ENCODE measurements at regions of chr12 and their contacts with region 1.

Region 1: GRCh38 chr12:93569656-93570551 is 2.6 kb upstream of the SOCS2 start:
- DNase-seq: peak; percentile 92
- ATAC-seq: peak; percentile 69
- H3K4me3 Mint-ChIP-seq: peak overlapping the region; percentile 85
- H3K27ac Mint-ChIP-seq: peak overlapping the region; percentile 90
- H3K4me1 Mint-ChIP-seq: peaks cover 13% of the 10 kb centered on the region
- H3K27me3 Mint-ChIP-seq: peaks cover 26% of the 10 kb centered on the region
- CTCF ChIP-seq: peak; percentile 76

Region 2: GRCh38 chr12:93223440-93224426 is 346.2 kb before region 1 on chr12:
- CTCF ChIA-PET with region 1: no interaction called
- POLR2A ChIA-PET with region 1: no interaction called
- DNase-seq: no peak
- ATAC-seq: no peak
- H3K4me3 Mint-ChIP-seq: no peak overlapping the region
- H3K27ac Mint-ChIP-seq: no peak overlapping the region
- H3K4me1 Mint-ChIP-seq: peaks cover 14% of the 10 kb centered on the region
- H3K27me3 Mint-ChIP-seq: no peaks in the 10 kb centered on the region; the same call in 1 of the 2 replicates
- CTCF ChIP-seq: no peak

Region 3: DNA sequence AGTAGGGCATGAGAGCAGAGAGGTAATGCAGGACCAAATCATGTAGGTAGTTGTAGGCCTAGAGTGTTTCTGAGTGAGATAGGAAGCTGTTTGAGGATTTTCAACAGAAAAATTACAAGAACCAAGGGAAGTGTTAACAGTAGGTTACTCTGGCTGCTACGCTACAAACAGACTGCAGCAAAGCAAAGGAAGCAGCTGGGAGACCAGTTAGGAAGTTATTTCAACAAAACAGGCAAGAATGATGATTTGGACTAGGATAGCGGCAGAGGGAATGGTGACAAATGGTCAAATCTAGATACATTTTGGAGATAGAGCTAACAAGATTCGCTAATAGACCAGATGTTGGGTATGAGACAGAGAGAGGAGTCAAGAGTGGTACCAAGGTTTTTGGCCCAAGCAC is 75.8 kb before region 1 on chr12:
- CTCF ChIA-PET with region 1: no interaction called
- POLR2A ChIA-PET with region 1: no interaction called
- DNase-seq: no peak
- ATAC-seq: no peak
- H3K4me3 Mint-ChIP-seq: no peak overlapping the region
- H3K27ac Mint-ChIP-seq: no peak overlapping the region
- H3K4me1 Mint-ChIP-seq: no peaks in the 10 kb centered on the region
- H3K27me3 Mint-ChIP-seq: no peaks in the 10 kb centered on the region
- CTCF ChIP-seq: no peak

Region 4: GRCh38 chr12:93514853-93515252 is 55.1 kb before region 1 on chr12:
- CTCF ChIA-PET with region 1: no interaction called
- POLR2A ChIA-PET with region 1: no interaction called
- DNase-seq: no peak
- ATAC-seq: no peak
- H3K4me3 Mint-ChIP-seq: no peak overlapping the region
- H3K27ac Mint-ChIP-seq: no peak overlapping the region
- H3K4me1 Mint-ChIP-seq: no peaks in the 10 kb centered on the region
- H3K27me3 Mint-ChIP-seq: no peaks in the 10 kb centered on the region
- CTCF ChIP-seq: no peak

Region 5: GRCh38 chr12:93583627-93584392 is 13.9 kb after region 1 on chr12:
- CTCF ChIA-PET with region 1: interaction called, 5 read pairs
- POLR2A ChIA-PET with region 1: interaction called, 11 read pairs
- DNase-seq: no peak
- ATAC-seq: peak; percentile 96
- H3K4me3 Mint-ChIP-seq: peak overlapping the region; percentile 22; the same call in 1 of the 2 replicates
- H3K27ac Mint-ChIP-seq: peak overlapping the region; percentile 83
- H3K4me1 Mint-ChIP-seq: peaks cover 56% of the 10 kb centered on the region
- H3K27me3 Mint-ChIP-seq: no peaks in the 10 kb centered on the region
- CTCF ChIP-seq: no peak

Region 6: DNA sequence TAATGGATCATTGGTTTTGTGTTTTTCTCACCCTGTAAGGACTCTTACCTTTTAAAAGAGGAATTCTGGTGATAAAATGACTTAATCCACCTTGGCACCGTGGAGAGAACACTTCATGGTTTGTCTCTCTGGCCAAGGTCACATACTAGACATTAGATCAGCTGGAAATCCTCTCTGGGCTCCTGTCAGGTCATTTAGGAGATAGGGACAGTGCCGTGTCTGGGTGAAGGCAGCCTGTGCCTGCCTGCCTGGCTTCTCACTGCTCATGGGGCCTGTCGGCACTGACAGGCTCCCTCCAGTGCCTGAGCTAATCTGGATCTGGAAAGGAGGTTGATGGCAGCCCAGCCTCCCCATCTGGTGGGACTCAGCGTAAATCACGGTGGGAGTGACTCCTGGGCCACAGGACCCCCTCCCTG is 113.0 kb after region 1 on chr12:
- CTCF ChIA-PET with region 1: interaction called, 11 read pairs
- POLR2A ChIA-PET with region 1: no interaction called
- DNase-seq: no peak
- ATAC-seq: peak; percentile 69
- H3K4me3 Mint-ChIP-seq: no peak overlapping the region
- H3K27ac Mint-ChIP-seq: peak overlapping the region; percentile 39
- H3K4me1 Mint-ChIP-seq: peaks cover 45% of the 10 kb centered on the region
- H3K27me3 Mint-ChIP-seq: no peaks in the 10 kb centered on the region
- CTCF ChIP-seq: no peak

Region 7: GRCh38 chr12:93742110-93742934 is 172.4 kb after region 1 on chr12:
- CTCF ChIA-PET with region 1: interaction called, 17 read pairs
- POLR2A ChIA-PET with region 1: interaction called, 10 read pairs
- DNase-seq: peak; percentile 69
- ATAC-seq: peak; percentile 67
- H3K4me3 Mint-ChIP-seq: peak overlapping the region; percentile 78
- H3K27ac Mint-ChIP-seq: peak overlapping the region; percentile 99
- H3K4me1 Mint-ChIP-seq: peaks cover 61% of the 10 kb centered on the region
- H3K27me3 Mint-ChIP-seq: no peaks in the 10 kb centered on the region
- CTCF ChIP-seq: no peak

Region 8: DNA sequence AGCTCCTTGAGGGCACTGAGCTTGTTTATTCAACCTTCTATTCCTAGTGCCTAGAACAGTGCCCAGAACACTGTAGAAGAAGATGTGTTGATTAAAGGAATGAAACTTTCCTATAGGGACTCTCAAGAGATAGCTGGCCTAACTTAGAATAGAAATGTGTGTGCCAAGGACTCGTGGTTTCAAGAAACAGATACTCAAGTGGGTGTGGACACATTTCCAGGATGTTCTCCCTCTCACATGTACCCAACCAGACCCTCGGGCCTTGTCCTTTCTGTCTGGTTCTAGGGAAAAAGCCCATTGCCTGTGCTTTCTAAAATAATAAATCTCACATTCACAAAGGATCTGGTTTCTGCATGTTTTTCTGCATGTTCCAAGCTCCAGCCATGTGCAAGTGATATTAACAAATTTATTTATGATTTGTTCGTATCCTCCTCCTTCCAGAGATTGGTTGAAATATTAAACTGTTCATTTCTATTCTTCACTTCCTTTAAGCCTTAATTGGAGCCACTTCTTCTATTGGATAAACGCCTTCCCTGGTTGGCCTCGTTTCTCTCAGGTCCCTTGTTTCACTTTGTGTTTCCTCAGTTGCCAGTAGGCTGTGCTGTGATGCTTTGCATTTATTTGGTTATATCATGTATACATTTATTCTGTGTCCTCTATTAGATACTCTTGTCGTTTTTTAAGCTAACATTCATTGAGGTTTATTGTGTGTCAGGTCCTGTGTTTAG is 197.1 kb after region 1 on chr12:
- CTCF ChIA-PET with region 1: interaction called, 14 read pairs
- POLR2A ChIA-PET with region 1: no interaction called
- DNase-seq: no peak
- ATAC-seq: peak; percentile 66
- H3K4me3 Mint-ChIP-seq: no peak overlapping the region
- H3K27ac Mint-ChIP-seq: no peak overlapping the region
- H3K4me1 Mint-ChIP-seq: peaks cover 27% of the 10 kb centered on the region
- H3K27me3 Mint-ChIP-seq: no peaks in the 10 kb centered on the region
- CTCF ChIP-seq: no peak

Region 9: DNA sequence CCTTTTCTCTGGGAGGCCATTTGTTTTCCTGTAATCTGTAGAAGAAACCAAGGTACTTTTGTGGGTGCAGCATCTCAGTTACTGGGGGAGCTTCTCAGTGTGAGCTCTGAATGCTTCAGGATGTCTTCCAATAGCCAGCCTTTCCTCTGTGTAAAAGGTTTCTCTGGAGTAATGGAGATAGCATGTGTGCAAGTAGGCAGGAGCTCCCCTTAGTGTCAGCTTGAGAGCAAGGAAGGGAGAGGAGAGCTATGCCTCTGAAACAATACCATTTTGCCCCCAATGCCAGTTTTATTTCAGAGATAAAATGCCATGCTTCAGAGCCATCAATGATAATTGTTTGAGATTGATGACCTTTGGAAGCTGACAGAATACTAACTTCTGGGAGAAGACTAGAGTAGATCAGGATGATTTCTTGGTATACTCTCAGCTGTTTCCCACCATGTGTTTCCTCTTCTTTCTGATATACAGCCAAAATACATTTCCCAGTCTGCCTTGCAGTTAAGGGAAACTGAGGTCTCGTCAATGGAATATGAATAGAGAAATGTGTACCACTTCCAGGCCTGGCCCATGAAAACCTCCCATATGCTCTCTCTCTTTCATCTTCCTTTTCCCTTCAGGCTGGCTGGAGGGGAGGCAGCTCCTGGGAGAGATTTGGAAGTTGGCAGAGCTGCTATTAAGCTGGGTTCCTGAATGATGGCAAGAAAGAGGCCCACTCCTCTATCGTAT is 233.0 kb after region 1 on chr12:
- CTCF ChIA-PET with region 1: interaction called, 11 read pairs
- POLR2A ChIA-PET with region 1: interaction called, 3 read pairs
- DNase-seq: no peak
- ATAC-seq: no peak; the same call in 1 of the 2 replicates
- H3K4me3 Mint-ChIP-seq: no peak overlapping the region
- H3K27ac Mint-ChIP-seq: no peak overlapping the region
- H3K4me1 Mint-ChIP-seq: peaks cover 30% of the 10 kb centered on the region
- H3K27me3 Mint-ChIP-seq: no peaks in the 10 kb centered on the region
- CTCF ChIP-seq: no peak

Region 10: GRCh38 chr12:94074980-94075928 is 505.4 kb after region 1 on chr12:
- CTCF ChIA-PET with region 1: interaction called, 17 read pairs
- POLR2A ChIA-PET with region 1: interaction called, 8 read pairs
- DNase-seq: no peak
- ATAC-seq: peak; percentile 85
- H3K4me3 Mint-ChIP-seq: no peak overlapping the region
- H3K27ac Mint-ChIP-seq: no peak overlapping the region
- H3K4me1 Mint-ChIP-seq: peaks cover 17% of the 10 kb centered on the region
- H3K27me3 Mint-ChIP-seq: no peaks in the 10 kb centered on the region
- CTCF ChIP-seq: 0 out of 2 replicates have a peak, but pooled peaks have one; percentile 24